OCI-LY7 (cell line): ENCODE measurements at regions of chr19 and their contacts with region 1.

Region 1: GRCh38 chr19:46402725-46403124 is 10.6 kb downstream of the CCDC8 start:
- DNase-seq: no peak
- H3K4me3 ChIP-seq: no peak overlapping the region
- H3K27ac ChIP-seq: peak overlapping the region; percentile 41
- H3K4me1 ChIP-seq: peaks cover 36% of the 10 kb centered on the region
- CTCF ChIP-seq: no peak

Region 2: DNA sequence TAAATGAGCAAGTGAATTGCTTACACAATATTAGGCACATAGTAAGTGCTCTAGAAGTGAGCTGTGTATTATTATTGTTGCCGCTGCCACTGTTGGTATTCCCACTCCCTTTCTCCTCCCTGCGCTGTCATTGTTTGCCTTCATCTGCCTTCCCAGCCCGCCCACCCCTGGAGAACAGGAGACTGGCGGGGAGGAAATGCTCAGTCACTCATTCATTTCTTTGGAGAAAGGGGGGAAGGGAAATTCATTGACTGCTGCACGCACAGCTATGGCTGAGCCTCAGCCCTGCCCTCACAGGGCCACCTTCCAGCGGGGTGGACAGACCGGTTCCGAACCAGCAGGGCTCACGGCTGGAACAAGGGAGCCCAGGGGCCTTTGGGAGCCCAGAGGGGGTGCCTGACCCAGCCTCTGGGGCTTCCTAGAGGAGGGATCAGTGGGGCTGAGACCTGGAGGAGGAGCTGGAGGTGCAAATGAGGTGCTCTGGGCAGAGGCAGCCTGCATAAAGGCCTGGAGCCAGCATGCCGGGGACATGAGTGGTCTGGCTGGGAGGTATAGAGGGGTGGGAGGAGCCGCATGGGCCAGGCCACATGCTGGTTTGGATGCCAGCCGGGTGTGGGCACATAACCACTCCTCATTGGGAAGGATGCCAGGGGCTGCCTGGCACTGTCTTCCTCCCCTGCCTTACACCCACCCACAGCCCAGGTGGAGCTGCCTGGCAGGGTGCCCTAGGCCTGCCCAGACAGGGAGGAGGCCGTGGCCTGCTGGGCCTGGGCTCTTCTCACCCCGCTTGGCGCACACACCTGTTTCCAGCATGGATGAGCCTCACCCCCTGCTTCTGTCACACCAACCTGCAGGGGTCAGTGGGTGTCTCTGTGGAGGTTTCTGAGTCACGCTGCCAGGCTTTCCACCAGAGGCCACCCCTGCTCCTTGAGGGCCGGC is 29.0 kb before region 1 on chr19:
- CTCF ChIA-PET with region 1: no interaction called
- POLR2A ChIA-PET with region 1: no interaction called
- intact Hi-C with region 1: no loop called
- DNase-seq: no peak
- H3K4me3 ChIP-seq: no peak overlapping the region
- H3K27ac ChIP-seq: no peak overlapping the region
- H3K4me1 ChIP-seq: no peaks in the 10 kb centered on the region
- CTCF ChIP-seq: no peak

Region 3: DNA sequence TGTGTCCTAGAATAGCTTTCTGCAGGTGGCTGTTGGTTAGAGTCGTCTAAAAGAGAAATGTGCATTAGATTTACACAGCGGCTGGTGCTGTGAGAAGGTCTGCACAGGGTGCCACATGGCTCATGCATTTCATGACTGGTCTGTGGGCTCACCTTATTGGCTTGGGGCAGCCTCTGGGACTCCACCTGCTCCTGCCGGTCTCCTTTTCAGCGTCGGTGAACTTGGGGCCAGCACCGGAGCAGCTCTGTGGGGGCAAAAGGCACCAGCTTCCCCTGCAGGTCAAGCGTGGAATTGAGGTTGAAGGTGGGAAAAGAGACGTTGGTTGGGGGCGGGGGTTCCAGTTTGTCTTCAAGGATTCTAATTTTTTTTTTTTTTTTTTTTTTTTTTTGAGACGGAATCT is 29.1 kb after region 1 on chr19:
- CTCF ChIA-PET with region 1: interaction called, 4 read pairs
- POLR2A ChIA-PET with region 1: no interaction called
- intact Hi-C with region 1: loop called (anchors 1 kb)
- DNase-seq: peak; percentile 90
- H3K4me3 ChIP-seq: peak overlapping the region; percentile 38
- H3K27ac ChIP-seq: peak overlapping the region; percentile 83
- H3K4me1 ChIP-seq: peaks cover 60% of the 10 kb centered on the region
- CTCF ChIP-seq: peak; percentile 75

Region 4: DNA sequence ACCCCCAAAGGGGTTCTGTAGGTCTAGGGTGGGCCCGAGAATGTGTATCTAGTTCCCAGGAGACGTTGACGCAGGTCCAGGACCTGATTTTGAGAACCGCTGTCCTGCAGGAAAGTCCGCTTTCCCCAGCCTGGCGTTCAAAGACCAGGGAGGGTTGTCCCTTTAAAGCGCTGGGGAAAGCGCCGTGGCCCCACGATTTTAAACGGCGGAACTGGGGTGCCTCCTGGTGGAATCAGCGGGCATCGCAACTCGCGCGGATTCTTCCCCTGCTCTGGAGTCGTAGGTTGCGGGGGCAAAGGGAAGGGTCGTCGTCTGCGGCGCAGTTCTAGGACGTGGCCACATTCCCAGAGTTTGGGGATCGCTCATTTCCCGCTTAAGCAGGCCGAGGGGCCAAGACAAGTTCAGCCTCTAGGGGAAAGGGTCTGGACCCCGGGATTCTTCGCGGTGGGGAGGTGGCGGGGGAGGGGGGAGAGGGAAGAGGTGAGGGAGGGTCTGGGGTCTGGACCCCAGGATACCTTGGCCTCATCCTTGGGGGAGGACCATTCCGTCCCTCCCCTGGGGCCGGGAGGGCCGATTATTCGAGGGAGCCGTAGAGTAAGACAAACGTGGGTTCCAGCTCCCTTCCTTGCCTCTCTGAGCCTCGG is 85.2 kb after region 1 on chr19:
- CTCF ChIA-PET with region 1: interaction called, 4 read pairs
- POLR2A ChIA-PET with region 1: interaction called, 5 read pairs
- intact Hi-C with region 1: loop called (anchors 1 kb)
- DNase-seq: peak; percentile 80
- H3K4me3 ChIP-seq: peak overlapping the region; percentile 35
- H3K27ac ChIP-seq: no peak overlapping the region
- H3K4me1 ChIP-seq: peaks cover 29% of the 10 kb centered on the region
- CTCF ChIP-seq: peak; percentile 93

Region 5: DNA sequence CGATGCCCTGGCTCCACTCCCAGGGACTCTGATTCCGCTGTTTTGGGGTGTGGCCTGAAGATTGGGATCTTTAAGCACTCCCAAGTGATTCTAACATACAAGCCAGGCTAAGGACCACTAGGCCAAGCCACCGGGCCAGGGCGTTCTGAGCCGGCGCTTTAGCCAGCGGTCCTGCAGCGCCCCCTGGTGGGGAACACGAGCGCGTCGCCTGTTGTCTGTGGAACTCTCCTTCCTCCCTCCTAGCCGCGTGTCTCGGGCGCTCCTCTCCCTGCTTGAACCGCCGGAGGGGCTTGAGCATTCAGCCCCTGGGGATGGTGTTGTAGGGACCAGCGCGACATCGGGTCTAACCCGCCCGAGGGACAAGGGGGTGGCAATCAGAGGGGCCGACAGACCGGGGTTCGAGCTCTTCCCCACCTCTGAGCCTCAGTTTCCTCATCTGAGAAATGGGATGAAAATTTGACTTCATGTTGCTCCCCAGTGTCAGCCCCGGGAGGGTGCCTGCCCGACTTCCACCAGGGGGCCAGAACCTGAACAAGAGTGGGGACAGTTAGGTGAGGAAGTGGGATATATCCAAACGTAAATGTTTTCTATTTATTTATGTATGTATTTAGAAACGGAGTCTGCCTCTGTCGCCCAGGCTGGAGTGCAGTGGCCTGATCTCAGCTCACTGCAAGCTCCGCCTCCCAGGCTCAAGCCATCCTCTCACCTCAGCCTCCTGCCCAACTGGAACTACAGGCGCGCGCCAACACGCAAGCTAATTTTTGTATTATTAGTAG is 110.9 kb after region 1 on chr19:
- CTCF ChIA-PET with region 1: no interaction called
- POLR2A ChIA-PET with region 1: no interaction called
- intact Hi-C with region 1: loop called (anchors 2 kb)
- DNase-seq: peak; percentile 85
- H3K4me3 ChIP-seq: no peak overlapping the region
- H3K27ac ChIP-seq: no peak overlapping the region
- H3K4me1 ChIP-seq: peaks cover 4% of the 10 kb centered on the region
- CTCF ChIP-seq: peak; percentile 95